A673 (cell line): ENCODE measurements at regions of chr2 and their contacts with region 1.

Region 1: GRCh38 chr2:189412330-189412953 is 28.8 kb upstream of the WDR75 start:
- DNase-seq: peak; percentile 66
- H3K4me3 ChIP-seq: no peak overlapping the region
- H3K27ac ChIP-seq: no peak overlapping the region
- H3K4me1 ChIP-seq: peaks cover 22% of the 10 kb centered on the region
- H3K27me3 ChIP-seq: no peaks in the 10 kb centered on the region
- CTCF ChIP-seq: peak; percentile 84

Region 2: DNA sequence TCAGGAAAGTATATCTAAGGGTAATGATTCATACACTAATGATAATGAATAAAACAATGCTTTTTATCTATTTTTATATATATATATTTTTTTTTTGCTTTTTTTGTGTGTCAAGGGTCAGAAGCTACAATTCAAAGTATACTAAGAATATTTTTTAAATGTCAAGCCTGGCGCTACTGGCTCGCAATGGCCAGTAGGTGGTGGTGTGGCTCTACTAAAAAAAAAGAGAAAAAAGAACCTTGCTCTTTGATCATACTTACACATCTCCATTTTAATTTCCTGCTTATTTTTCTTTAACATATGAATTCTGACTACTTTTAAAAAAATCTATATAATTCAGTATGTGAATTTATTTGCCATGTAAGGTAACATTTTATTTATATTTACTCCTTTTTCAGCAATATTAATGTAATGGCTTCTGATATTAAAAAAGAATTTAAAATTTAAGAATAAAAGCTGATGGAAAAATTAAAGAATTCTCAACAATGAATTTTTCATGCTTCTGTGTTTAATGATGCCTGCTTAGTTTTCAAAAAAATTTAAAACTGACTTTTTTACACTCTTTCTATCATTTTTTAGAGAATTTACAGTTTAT is 887.8 kb before region 1 on chr2:
- CTCF ChIA-PET with region 1: interaction called, 3 read pairs
- POLR2A ChIA-PET with region 1: no interaction called
- intact Hi-C with region 1: loop called (anchors 1 kb)
- DNase-seq: peak; percentile 81
- H3K4me3 ChIP-seq: no peak overlapping the region
- H3K27ac ChIP-seq: no peak overlapping the region
- H3K4me1 ChIP-seq: peaks cover 17% of the 10 kb centered on the region
- H3K27me3 ChIP-seq: no peaks in the 10 kb centered on the region
- CTCF ChIP-seq: peak; percentile 85

Region 3: GRCh38 chr2:188978291-188979081 is 434.0 kb before region 1 on chr2:
- CTCF ChIA-PET with region 1: no interaction called
- POLR2A ChIA-PET with region 1: no interaction called
- intact Hi-C with region 1: loop called (anchors 2 kb)
- DNase-seq: peak; percentile 82
- H3K4me3 ChIP-seq: peak overlapping the region; percentile 5
- H3K27ac ChIP-seq: no peak overlapping the region
- H3K4me1 ChIP-seq: peaks cover 36% of the 10 kb centered on the region
- H3K27me3 ChIP-seq: no peaks in the 10 kb centered on the region
- CTCF ChIP-seq: peak; percentile 72

Region 4: DNA sequence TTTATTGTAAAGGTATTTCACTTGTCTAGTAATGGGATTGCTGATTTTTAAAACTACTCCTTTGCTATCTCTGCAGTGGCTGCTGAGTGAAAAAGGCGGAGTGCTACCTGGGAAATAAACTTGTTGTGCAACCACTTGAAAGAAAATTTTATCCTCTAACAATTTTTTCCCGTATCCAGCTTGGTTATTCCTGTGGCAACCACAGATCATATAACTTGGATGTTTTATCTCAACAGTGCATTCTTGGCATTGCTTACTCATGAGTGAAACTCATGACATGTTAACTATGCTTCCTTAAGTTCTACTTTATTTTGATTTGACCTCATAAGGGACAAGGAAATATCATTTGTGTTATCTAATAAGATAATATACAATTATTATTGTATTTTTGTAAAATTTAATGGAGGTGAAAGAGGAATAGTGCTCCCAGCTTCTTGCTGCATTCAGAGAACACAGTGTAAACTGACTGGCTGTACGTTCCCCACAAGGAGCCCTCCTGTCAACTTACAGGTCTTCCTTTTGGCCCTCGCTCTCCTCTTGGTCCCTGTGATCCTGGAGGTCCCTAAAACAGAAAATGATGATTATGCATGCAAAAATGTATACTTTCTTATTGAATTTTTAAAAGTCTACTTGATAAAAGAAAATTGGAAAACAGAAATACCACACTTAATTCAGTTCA is 315.5 kb before region 1 on chr2:
- CTCF ChIA-PET with region 1: no interaction called
- POLR2A ChIA-PET with region 1: no interaction called
- intact Hi-C with region 1: loop called (anchors 1 kb)
- DNase-seq: no peak
- H3K4me3 ChIP-seq: no peak overlapping the region
- H3K27ac ChIP-seq: no peak overlapping the region
- H3K4me1 ChIP-seq: peaks cover 7% of the 10 kb centered on the region
- H3K27me3 ChIP-seq: no peaks in the 10 kb centered on the region
- CTCF ChIP-seq: no peak

Region 5: DNA sequence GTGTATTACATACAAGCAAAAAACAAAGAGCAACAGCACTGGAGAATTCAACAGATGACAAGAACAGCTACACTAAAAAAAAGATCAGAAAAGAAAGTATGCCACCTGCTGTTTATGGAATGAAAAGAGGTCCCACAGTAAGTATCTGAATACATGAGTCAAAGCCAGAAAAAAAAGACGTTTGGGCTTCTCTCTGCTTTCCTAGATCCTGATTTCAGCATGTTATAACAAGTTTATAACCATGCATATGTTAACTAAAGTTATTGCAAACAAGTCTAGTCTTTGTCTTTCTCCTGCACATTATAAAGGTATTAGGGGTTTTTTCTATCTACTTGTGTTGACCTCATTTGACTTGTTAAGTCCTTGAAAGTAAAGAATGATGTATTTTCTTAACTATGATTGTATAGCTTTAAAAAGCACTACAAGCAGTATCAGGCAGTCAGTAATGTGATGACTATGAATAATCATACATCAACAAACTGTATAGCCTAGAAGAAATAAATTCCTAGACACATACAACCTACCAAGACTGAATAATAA is 124.4 kb before region 1 on chr2:
- CTCF ChIA-PET with region 1: no interaction called
- POLR2A ChIA-PET with region 1: no interaction called
- intact Hi-C with region 1: loop called (anchors 5 kb)
- DNase-seq: peak; percentile 91
- H3K4me3 ChIP-seq: no peak overlapping the region
- H3K27ac ChIP-seq: no peak overlapping the region
- H3K4me1 ChIP-seq: peaks cover 17% of the 10 kb centered on the region
- H3K27me3 ChIP-seq: no peaks in the 10 kb centered on the region
- CTCF ChIP-seq: peak; percentile 73